ENCODE measurements at regions of chr5 and their contacts with region 1.

Region 1: DNA sequence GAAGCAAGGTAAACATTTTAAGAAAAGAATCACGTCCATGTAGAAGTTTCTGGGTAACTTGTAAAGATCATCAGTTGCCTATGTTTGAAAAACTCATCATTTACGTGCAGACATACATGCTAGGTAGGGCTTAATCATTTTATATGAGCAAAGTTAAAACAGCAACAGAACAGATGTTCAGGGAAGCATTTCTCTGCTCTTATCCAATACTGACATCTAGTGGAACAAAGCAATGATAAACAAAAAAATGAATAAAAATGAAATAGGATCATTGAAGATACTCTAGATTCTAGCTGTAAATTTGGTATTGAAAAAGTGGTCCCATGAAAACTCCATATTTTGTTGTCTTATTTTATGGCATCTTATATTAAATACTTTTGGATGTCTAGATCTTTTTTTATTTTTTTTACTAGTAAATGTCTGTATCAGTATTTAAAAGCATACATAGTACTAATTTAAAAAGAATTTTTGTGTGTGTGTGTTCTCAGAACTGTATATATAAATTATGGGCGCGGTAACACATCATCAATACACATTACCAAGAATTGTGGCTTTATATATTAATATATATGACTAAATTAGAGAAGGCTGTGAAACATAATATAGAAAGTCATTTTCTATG is 1050.2 kb downstream of the CDH12 start:
- DNase-seq: peak; percentile 79
- ATAC-seq: peak; percentile 57
- H3K4me3 ChIP-seq: no peak overlapping the region
- H3K27ac ChIP-seq: no peak overlapping the region
- H3K4me1 ChIP-seq: peaks cover 22% of the 10 kb centered on the region
- H3K27me3 ChIP-seq: no peaks in the 10 kb centered on the region
- CTCF ChIP-seq: peak; percentile 95

Region 2: GRCh38 chr5:20680718-20681302 is 1122.2 kb before region 1 on chr5:
- CTCF ChIA-PET with region 1: no interaction called
- POLR2A ChIA-PET with region 1: no interaction called
- intact Hi-C with region 1: loop called (anchors 10 kb)
- DNase-seq: no peak
- ATAC-seq: no peak
- H3K4me3 ChIP-seq: no peak overlapping the region
- H3K27ac ChIP-seq: no peak overlapping the region
- H3K4me1 ChIP-seq: peaks cover 26% of the 10 kb centered on the region
- H3K27me3 ChIP-seq: no peaks in the 10 kb centered on the region
- CTCF ChIP-seq: no peak

Region 3: DNA sequence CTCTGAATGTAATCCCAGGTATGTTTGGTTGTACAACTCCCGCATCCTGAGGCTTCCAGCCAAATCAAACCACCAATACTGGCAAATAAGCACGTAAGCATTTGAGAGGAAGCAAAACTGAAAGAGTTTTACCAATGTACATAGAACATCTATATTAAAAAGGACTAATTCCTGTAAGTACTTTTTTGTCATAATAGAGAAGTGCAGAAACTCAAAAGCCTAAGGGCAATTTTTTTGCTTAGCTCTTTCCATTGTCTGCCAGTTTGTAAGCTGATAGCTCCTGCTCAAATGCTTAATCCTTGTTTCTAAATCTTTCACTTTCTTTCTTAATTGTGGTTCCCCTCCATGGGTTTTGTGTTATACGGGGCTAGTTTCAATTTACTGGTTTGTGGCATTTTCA is 101.7 kb before region 1 on chr5:
- CTCF ChIA-PET with region 1: no interaction called
- POLR2A ChIA-PET with region 1: no interaction called
- intact Hi-C with region 1: no loop called
- DNase-seq: peak; percentile 79
- ATAC-seq: peak; percentile 74
- H3K4me3 ChIP-seq: peak overlapping the region; percentile 56
- H3K27ac ChIP-seq: peak overlapping the region; percentile 32; the same call in 1 of the 2 replicates
- H3K4me1 ChIP-seq: peaks cover 15% of the 10 kb centered on the region
- H3K27me3 ChIP-seq: no peaks in the 10 kb centered on the region
- CTCF ChIP-seq: no peak

Region 4: GRCh38 chr5:23139338-23140171 is 1336.6 kb after region 1 on chr5:
- CTCF ChIA-PET with region 1: no interaction called
- POLR2A ChIA-PET with region 1: no interaction called
- intact Hi-C with region 1: no loop called
- DNase-seq: peak; percentile 56
- ATAC-seq: 0 out of 2 replicates have a peak, but pooled peaks have one; percentile 35
- H3K4me3 ChIP-seq: no peak overlapping the region
- H3K27ac ChIP-seq: no peak overlapping the region
- H3K4me1 ChIP-seq: no peaks in the 10 kb centered on the region
- H3K27me3 ChIP-seq: no peaks in the 10 kb centered on the region
- CTCF ChIP-seq: peak; percentile 71